ENCODE measurements at regions of chr12 and their contacts with region 1.

Region 1: GRCh38 chr12:42325653-42326474 is at the starts of genes PPHLN1 and ZCRB1:
- DNase-seq: peak; percentile 22
- H3K4me3 ChIP-seq: peak within 1 kb of the TSS; percentile 70
- CTCF ChIP-seq: no peak

Region 2: DNA sequence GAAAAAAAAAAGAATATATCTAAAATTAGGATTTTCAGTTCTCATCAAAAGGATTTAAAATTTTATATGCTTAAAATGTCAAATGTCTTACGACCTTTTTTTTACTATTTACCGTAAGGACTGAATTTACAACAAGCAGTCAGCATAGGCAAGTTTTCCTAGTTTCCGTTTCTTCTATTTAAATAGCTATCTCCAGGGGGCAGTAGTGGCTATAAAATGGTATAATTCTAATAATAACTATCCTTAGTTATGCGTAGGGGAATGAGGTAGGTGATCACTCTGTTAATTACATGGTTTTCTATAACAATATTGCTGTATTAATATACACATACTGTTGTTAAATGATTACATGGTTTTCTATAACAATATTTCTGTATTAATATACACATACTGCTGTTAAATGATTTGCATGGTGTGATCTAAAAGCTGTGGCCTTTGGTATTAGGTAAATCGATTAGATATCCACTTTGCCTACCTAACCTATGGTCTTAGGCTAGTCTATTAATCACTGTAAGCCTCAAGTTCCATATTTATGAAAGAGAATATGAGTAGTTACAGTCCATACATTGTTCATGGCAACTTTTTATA is 1355.5 kb before region 1 on chr12:
- in situ Hi-C with region 1: loop called (anchors 25 kb)
- DNase-seq: no peak
- H3K4me3 ChIP-seq: no peak overlapping the region
- CTCF ChIP-seq: no peak

Region 3: GRCh38 chr12:42135264-42135814 is 190.5 kb before region 1 on chr12:
- in situ Hi-C with region 1: loop called (anchors 5 kb)
- DNase-seq: no peak
- H3K4me3 ChIP-seq: no peak overlapping the region
- CTCF ChIP-seq: no peak

Region 4: DNA sequence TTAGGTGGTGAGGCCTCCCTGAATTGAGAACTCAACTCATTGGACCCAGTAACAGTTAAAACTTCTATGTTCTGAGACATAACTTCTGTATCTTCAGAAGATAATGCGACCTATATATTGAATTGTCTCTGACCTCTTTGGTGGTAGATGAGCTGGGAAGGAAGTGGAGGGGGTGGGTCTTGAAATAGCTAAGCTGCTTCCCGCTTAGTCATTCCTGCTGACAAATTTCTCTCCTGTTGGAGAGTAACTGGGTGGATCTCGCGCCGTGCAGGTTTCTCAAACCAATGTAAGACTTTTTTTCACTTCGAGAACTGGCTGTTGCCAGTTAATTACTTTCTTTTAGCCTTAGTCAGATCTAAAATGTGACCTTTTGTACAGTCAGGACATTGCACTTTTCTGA is 100.9 kb after region 1 on chr12:
- in situ Hi-C with region 1: no loop called
- DNase-seq: no peak
- H3K4me3 ChIP-seq: no peak overlapping the region
- CTCF ChIP-seq: no peak